K562 (cell line): ENCODE measurements at regions of chr14 and their contacts with region 1.

Region 1: DNA sequence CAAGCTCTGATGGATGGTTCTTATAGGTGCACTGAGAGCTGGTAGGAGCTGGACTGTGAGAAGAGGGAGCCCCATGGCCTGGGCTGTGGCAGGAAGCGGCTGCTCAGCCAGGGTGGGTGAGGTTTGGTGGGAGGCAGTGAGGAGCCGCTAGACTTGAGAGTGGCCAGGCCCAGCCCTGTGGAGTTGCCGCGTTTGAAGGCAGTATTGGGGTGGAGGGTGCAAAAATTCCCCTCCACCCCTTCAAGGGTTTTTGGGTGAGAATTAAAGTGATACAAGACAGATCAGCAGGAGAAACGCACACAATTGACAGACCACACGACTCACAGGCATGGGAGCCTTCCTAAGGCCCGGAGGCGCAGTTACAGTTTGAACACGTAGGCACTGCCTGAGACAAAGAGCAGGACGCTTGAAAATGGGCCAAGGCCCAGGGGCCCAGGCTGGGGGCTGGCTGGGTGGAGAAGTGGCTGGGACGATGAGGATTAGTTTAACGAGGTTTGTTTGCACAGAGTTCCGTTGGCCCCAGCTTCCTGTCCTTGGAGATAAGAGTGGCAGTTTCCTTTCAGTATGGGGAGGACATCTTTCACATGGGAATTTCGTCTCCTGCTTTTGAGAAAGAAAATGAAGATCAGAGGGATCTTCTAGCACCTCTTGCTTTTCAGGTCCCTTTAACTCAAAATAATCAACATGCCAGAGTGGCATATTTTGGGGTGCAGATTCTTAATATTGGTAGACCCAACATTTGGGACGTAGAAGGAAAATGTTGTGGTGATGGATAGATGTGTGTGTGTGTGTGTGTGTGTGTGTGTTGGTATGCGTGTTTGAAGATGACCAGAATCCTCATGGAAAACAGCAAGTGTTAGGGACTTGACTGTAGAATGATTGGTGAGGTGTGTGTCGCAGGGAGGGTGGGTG is 44.5 kb downstream of the DLK1 start:
- DNase-seq: peak; percentile 72 to 92 (median 84)
- ATAC-seq: peak; percentile 93
- H3K4me3 ChIP-seq: peak overlapping the region; percentile 23; the same call in 1 of the 2 replicates
- H3K27ac ChIP-seq: peak overlapping the region; percentile 99
- H3K4me1 ChIP-seq: peaks cover 40 to 58% of the 10 kb centered on the region in 2 experiments
- H3K27me3 ChIP-seq: no peaks in the 10 kb centered on the region
- CTCF ChIP-seq: no peak
- EP300 ChIP-seq: peak; percentile 98
- POLR2A ChIP-seq: peak; percentile 66; the same call in 1 of the 2 replicates
- RAD21 ChIP-seq: peak in 1 of 2 experiments; percentile 38; a peak in 2 of 4 replicates

Region 2: DNA sequence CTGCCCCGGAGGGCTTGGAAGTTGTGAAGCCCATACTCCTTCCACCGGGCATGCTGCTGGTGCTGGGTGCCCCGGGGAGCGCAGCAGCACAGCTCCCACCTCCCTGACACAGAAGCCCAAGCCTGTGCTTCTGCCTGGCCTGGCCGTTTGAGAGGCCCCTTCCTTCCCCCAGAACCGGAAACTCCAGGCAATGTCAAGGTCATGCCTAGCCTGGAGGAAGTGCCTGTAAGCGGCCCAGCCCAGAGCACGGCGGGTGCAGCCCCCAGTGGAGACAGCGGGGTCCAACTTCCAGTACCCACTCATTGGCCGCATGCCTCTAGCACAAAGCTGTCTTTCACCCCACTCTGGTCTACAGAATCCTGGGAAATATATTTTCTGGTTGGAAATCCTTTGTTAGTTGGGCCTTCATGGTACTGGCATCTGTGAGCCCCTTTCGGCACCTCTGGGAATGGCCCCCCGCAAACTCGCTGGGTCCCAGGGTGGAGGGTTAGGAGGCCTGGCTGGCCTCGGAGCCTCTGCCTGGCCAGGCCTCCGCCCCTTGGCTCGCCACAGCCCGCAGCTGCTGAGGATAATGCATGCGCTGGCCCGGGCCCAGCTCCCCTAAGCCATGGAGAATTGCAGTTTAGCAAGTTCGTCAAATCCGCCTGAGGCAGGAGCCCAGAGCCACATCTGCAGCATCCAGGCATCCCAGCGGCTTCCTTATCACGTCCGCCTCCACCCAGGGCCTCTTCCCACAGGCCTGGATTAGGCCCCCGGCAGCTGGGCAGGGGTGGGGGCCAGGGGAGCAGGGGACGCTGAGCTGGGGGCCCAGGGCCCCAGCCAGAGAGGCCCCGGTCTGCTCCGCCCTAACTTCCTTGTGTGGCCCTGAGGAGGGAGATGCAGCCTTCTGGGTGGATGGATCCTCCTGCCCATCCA is 93.3 kb before region 1 on chr14:
- CTCF ChIA-PET with region 1: no interaction called
- POLR2A ChIA-PET with region 1: no interaction called
- in situ Hi-C with region 1: no loop called
- intact Hi-C with region 1: loop called (anchors 2 kb)
- DNase-seq: peak; percentile 64 to 85 (median 72)
- ATAC-seq: peak; percentile 54
- H3K4me3 ChIP-seq: no peak overlapping the region
- H3K27ac ChIP-seq: peak overlapping the region; percentile 87
- H3K4me1 ChIP-seq: peaks cover 71% of the 10 kb centered on the region in 2 experiments
- H3K27me3 ChIP-seq: no peaks in the 10 kb centered on the region
- CTCF ChIP-seq: no peak
- EP300 ChIP-seq: peak; percentile 39; the same call in 1 of the 2 replicates
- POLR2A ChIP-seq: no peak
- RAD21 ChIP-seq: 0 out of 4 replicates have a peak, but pooled peaks of 1 of the 2 experiments have one; percentile 14

Region 3: GRCh38 chr14:100885617-100886016 is 114.5 kb after region 1 on chr14:
- CTCF ChIA-PET with region 1: no interaction called
- POLR2A ChIA-PET with region 1: no interaction called
- in situ Hi-C with region 1: no loop called
- intact Hi-C with region 1: no loop called
- DNase-seq: no peak
- ATAC-seq: no peak
- H3K4me3 ChIP-seq: no peak overlapping the region
- H3K27ac ChIP-seq: no peak overlapping the region
- H3K4me1 ChIP-seq: peaks cover 0 to 5% of the 10 kb centered on the region in 2 experiments; a peak in 2 of 5 replicates
- H3K27me3 ChIP-seq: peaks cover 0 to 35% of the 10 kb centered on the region in 2 experiments; a peak in 2 of 5 replicates
- CTCF ChIP-seq: no peak
- EP300 ChIP-seq: no peak
- POLR2A ChIP-seq: no peak
- RAD21 ChIP-seq: no peak

Region 4: DNA sequence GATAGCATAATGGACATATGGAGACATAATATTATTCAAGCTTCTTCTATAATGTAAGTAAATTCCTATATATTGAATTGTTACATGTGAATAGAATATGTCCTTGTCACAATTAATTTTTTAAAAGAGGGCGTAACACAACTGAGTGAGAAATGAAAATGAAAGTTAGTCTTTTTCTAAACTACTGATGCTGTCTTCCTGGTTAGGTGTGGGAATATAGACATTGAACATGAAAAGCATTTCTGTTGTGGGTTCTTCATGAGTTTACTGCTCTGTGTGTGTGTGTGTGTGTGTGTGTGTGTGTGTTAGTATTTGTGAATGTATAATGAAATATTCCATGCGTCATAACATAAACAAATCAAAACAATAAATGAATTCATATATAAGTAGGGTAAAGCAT is 172.9 kb after region 1 on chr14:
- CTCF ChIA-PET with region 1: no interaction called
- POLR2A ChIA-PET with region 1: no interaction called
- in situ Hi-C with region 1: no loop called
- intact Hi-C with region 1: no loop called
- DNase-seq: no peak
- ATAC-seq: no peak
- H3K4me3 ChIP-seq: no peak overlapping the region
- H3K27ac ChIP-seq: no peak overlapping the region
- H3K4me1 ChIP-seq: no peaks in the 10 kb centered on the region
- H3K27me3 ChIP-seq: no peaks in the 10 kb centered on the region
- CTCF ChIP-seq: no peak
- EP300 ChIP-seq: no peak
- POLR2A ChIP-seq: no peak
- RAD21 ChIP-seq: no peak

Region 5: GRCh38 chr14:101575582-101575981 is 804.4 kb after region 1 on chr14:
- CTCF ChIA-PET with region 1: no interaction called
- POLR2A ChIA-PET with region 1: no interaction called
- in situ Hi-C with region 1: no loop called
- intact Hi-C with region 1: no loop called
- DNase-seq: no peak
- ATAC-seq: no peak
- H3K4me3 ChIP-seq: no peak overlapping the region
- H3K27ac ChIP-seq: no peak overlapping the region
- H3K4me1 ChIP-seq: no peaks in the 10 kb centered on the region
- H3K27me3 ChIP-seq: peaks cover 0 to 8% of the 10 kb centered on the region in 2 experiments; a peak in 1 of 5 replicates
- CTCF ChIP-seq: peak in 1 of 3 experiments; percentile 36; a peak in 1 of 6 replicates
- EP300 ChIP-seq: no peak
- POLR2A ChIP-seq: no peak
- RAD21 ChIP-seq: no peak